ENCODE measurements at regions of chr3 and their contacts with region 1.

Region 1: GRCh38 chr3:129316131-129317013 is 37.7 kb downstream of the HMCES start:
- DNase-seq: peak; percentile 82 to 89 (median 85)
- H3K4me3 ChIP-seq: peak overlapping the region; percentile 81 to 86
- H3K4me3 Mint-ChIP-seq: peak overlapping the region; percentile 79 to 96 (median 89)
- H3K27ac ChIP-seq: peak overlapping the region; percentile 74
- H3K27ac Mint-ChIP-seq: peak overlapping the region; percentile 70 to 92 (median 87)
- H3K4me1 ChIP-seq: peaks cover 37% of the 10 kb centered on the region
- H3K4me1 Mint-ChIP-seq: peaks cover 13 to 30% (median 19%) of the 10 kb centered on the region in 4 donors
- H3K27me3 ChIP-seq: no peaks in the 10 kb centered on the region
- H3K27me3 Mint-ChIP-seq: no peaks in the 10 kb centered on the region

Region 2: DNA sequence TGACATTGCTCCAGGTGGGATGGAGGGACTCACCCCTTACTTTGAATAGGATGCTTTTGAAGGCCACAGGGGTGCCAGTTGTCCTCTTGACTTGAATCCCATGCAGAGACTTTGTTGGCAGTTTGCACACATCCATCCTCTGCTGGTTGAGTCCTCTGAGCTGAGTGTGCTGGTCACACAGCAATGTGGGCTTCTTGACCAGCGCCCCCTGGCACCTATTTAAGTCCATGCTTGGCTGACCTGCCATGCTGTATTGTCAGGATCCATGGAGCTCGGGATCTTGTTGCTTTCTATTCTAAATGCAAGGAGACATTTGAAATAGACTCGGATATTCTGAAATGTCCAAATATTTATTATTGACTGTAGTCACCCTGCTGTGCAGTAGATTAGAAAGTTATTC is 570.6 kb before region 1 on chr3:
- CTCF ChIA-PET with region 1: no interaction called
- POLR2A ChIA-PET with region 1: no interaction called
- intact Hi-C with region 1: no loop called
- DNase-seq: no peak
- H3K4me3 ChIP-seq: no peak overlapping the region
- H3K4me3 Mint-ChIP-seq: no peak overlapping the region
- H3K27ac ChIP-seq: no peak overlapping the region
- H3K27ac Mint-ChIP-seq: no peak overlapping the region
- H3K4me1 ChIP-seq: peaks cover 26% of the 10 kb centered on the region
- H3K4me1 Mint-ChIP-seq: peaks cover 29 to 55% (median 43%) of the 10 kb centered on the region in 4 donors
- H3K27me3 ChIP-seq: no peaks in the 10 kb centered on the region
- H3K27me3 Mint-ChIP-seq: no peaks in the 10 kb centered on the region

Region 3: GRCh38 chr3:129003578-129004160 is 312.7 kb before region 1 on chr3:
- CTCF ChIA-PET with region 1: interaction called, 4 read pairs
- POLR2A ChIA-PET with region 1: interaction called, 10 read pairs
- intact Hi-C with region 1: no loop called
- DNase-seq: peak; percentile 50 to 64 (median 57)
- H3K4me3 ChIP-seq: no peak overlapping the region
- H3K4me3 Mint-ChIP-seq: peak overlapping the region in 4 of 8 donors; percentile 59 to 73 (median 64)
- H3K27ac ChIP-seq: no peak overlapping the region
- H3K27ac Mint-ChIP-seq: peak overlapping the region in 1 of 7 donors; percentile 47
- H3K4me1 ChIP-seq: peaks cover 36% of the 10 kb centered on the region
- H3K4me1 Mint-ChIP-seq: peaks cover 20 to 47% (median 32%) of the 10 kb centered on the region in 4 donors
- H3K27me3 ChIP-seq: peaks cover 25% of the 10 kb centered on the region
- H3K27me3 Mint-ChIP-seq: peaks cover 22 to 27% of the 10 kb centered on the region in 2 donors

Region 4: DNA sequence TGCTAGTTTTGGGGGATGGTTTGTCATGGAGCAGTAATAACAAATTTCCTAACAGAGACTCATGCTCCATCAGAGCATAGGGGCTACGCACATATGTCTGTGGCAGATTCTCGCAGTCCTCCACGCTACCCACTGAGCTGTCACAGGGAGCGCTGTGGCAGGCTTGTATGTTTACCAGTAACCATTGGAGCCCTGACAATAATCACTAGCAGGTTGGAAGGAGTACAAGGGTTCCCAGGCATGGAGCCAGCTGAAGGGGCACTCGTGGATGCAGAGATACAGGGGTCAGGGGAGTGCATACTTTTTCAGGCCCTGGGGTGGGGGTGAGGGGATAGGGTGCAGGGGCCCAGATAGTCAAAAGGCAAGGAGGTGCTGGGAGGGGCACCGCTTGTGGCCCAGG is 263.7 kb before region 1 on chr3:
- CTCF ChIA-PET with region 1: interaction called, 14 read pairs
- POLR2A ChIA-PET with region 1: interaction called, 7 read pairs
- intact Hi-C with region 1: no loop called
- DNase-seq: no peak
- H3K4me3 ChIP-seq: no peak overlapping the region
- H3K4me3 Mint-ChIP-seq: no peak overlapping the region
- H3K27ac ChIP-seq: no peak overlapping the region
- H3K27ac Mint-ChIP-seq: peak overlapping the region in 3 of 7 donors; percentile 33 to 80 (median 52)
- H3K4me1 ChIP-seq: peaks cover 5% of the 10 kb centered on the region
- H3K4me1 Mint-ChIP-seq: peaks cover 6 to 8% (median 7%) of the 10 kb centered on the region in 4 donors
- H3K27me3 ChIP-seq: no peaks in the 10 kb centered on the region
- H3K27me3 Mint-ChIP-seq: no peaks in the 10 kb centered on the region

Region 5: DNA sequence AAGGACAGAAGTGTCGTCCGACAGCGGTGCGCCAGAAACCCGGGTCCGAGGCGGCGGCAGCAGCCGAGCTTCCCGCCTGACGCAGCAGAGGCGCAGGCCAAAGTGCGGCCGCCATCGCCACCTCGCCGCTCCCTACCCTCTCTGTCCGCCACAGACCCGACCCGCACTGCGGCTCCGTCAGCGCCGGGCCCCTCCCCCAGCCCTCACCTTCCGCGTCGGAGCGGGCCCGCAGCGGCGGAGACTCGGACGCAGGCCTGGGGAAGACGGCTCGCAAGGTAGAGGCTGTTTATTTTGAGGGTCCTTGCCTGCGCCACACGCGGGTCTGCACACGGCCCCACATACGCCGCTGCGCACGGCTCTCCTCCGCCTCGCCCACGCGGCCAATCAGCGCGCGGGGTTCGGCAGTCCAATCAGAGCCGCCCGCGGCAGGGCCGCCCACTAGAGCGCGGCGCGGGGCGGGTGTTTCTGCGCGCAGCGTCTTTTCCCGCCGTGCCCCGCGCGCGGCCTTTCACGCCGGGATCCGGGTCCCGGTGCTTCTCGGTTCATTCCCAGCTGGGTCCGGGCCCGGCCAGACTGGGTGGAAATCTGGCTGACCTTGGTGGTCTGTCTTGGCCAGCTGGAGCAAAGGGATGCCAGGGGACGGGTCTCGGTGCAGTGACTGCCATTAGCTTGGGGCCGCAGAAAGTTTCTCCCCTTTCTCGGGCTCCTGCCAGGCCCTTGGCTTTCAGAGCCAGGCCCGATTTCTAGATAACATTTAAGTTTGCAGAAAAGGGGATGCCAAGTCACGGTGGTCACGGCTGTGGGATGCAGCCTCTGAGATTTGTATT is 132.6 kb before region 1 on chr3 and contains the start of gene CNBP:
- CTCF ChIA-PET with region 1: no interaction called
- POLR2A ChIA-PET with region 1: interaction called, 27 read pairs
- intact Hi-C with region 1: loop called (anchors 5 kb)
- DNase-seq: peak; percentile 90 to 95 (median 93)
- H3K4me3 ChIP-seq: peak within 1 kb of the TSS; percentile 51 to 93
- H3K4me3 Mint-ChIP-seq: peak within 1 kb of the TSS; percentile 89 to 99 (median 97)
- H3K27ac ChIP-seq: peak within 1 kb of the TSS; percentile 99
- H3K27ac Mint-ChIP-seq: peak within 1 kb of the TSS; percentile 91 to 99 (median 98)
- H3K4me1 ChIP-seq: peaks cover 41% of the 10 kb centered on the region
- H3K4me1 Mint-ChIP-seq: peaks cover 20 to 55% (median 31%) of the 10 kb centered on the region in 4 donors
- H3K27me3 ChIP-seq: no peaks in the 10 kb centered on the region
- H3K27me3 Mint-ChIP-seq: no peaks in the 10 kb centered on the region
- total RNA-seq, gene CNBP: 369 to 400 TPM

Region 6: GRCh38 chr3:129211772-129212171 is 104.6 kb before region 1 on chr3:
- CTCF ChIA-PET with region 1: no interaction called
- POLR2A ChIA-PET with region 1: no interaction called
- intact Hi-C with region 1: no loop called
- DNase-seq: no peak
- H3K4me3 ChIP-seq: no peak overlapping the region
- H3K4me3 Mint-ChIP-seq: no peak overlapping the region
- H3K27ac ChIP-seq: no peak overlapping the region
- H3K27ac Mint-ChIP-seq: no peak overlapping the region
- H3K4me1 ChIP-seq: no peaks in the 10 kb centered on the region
- H3K4me1 Mint-ChIP-seq: no peaks in the 10 kb centered on the region
- H3K27me3 ChIP-seq: no peaks in the 10 kb centered on the region
- H3K27me3 Mint-ChIP-seq: peaks cover 0 to 5% of the 10 kb centered on the region in 2 donors

Region 7: DNA sequence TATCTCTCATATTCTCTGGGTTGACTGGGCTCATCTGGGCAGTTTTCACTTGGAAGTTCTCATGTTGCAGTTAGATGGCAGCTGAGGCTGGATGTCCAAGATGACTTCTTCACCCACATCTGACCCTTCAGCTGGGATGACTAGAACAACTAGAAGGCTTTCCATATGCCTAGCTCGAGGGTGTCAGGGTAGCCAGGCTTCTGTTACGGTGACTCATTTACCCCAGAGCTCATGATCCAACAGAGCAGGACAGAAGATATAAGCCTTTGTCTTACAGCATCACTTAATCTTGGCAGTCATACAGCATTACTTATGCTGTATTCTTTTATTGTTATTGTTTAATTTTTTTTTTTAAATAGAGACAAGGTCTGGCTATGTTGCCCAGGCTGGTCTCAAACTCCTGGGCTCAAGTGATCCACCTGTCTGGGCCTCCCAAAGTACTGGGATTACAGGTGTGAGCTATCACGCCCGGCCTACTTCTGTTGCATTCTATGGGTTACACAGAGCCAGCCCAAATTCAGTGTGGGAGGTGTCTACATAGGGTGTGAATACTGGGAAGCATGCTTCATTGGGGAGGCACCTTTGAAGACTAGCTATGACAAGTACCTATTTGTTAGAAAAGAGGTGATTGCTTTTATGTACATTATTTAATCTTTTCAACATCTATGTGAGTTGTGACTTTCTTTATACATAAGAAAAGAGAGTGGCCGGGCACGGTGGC is 27.0 kb before region 1 on chr3:
- CTCF ChIA-PET with region 1: interaction called, 6 read pairs
- POLR2A ChIA-PET with region 1: interaction called, 315 read pairs
- intact Hi-C with region 1: no loop called
- DNase-seq: no peak
- H3K4me3 ChIP-seq: no peak overlapping the region
- H3K4me3 Mint-ChIP-seq: no peak overlapping the region
- H3K27ac ChIP-seq: no peak overlapping the region
- H3K27ac Mint-ChIP-seq: peak overlapping the region in 2 of 7 donors; percentile 62 to 71
- H3K4me1 ChIP-seq: no peaks in the 10 kb centered on the region
- H3K4me1 Mint-ChIP-seq: peaks cover 9 to 13% (median 9%) of the 10 kb centered on the region in 4 donors
- H3K27me3 ChIP-seq: no peaks in the 10 kb centered on the region
- H3K27me3 Mint-ChIP-seq: no peaks in the 10 kb centered on the region

Region 8: GRCh38 chr3:129348734-129349133 is 32.4 kb after region 1 on chr3:
- CTCF ChIA-PET with region 1: no interaction called
- POLR2A ChIA-PET with region 1: no interaction called
- intact Hi-C with region 1: no loop called
- DNase-seq: no peak
- H3K4me3 ChIP-seq: no peak overlapping the region
- H3K4me3 Mint-ChIP-seq: no peak overlapping the region
- H3K27ac ChIP-seq: no peak overlapping the region
- H3K27ac Mint-ChIP-seq: no peak overlapping the region
- H3K4me1 ChIP-seq: peaks cover 6% of the 10 kb centered on the region
- H3K4me1 Mint-ChIP-seq: peaks cover 0 to 6% (median under 1%) of the 10 kb centered on the region in 4 donors
- H3K27me3 ChIP-seq: no peaks in the 10 kb centered on the region
- H3K27me3 Mint-ChIP-seq: peaks cover 4 to 5% of the 10 kb centered on the region in 2 donors

Region 9: GRCh38 chr3:129399145-129399894 is 82.9 kb after region 1 on chr3:
- CTCF ChIA-PET with region 1: interaction called, 5 read pairs
- POLR2A ChIA-PET with region 1: interaction called, 11 read pairs
- intact Hi-C with region 1: no loop called
- DNase-seq: peak; percentile 83 to 88 (median 84)
- H3K4me3 ChIP-seq: peak overlapping the region; percentile 83 to 95
- H3K4me3 Mint-ChIP-seq: peak overlapping the region; percentile 97 to 100 (median 98)
- H3K27ac ChIP-seq: peak overlapping the region; percentile 70
- H3K27ac Mint-ChIP-seq: peak overlapping the region; percentile 98 to 100 (median 99)
- H3K4me1 ChIP-seq: peaks cover 28% of the 10 kb centered on the region
- H3K4me1 Mint-ChIP-seq: peaks cover 21 to 55% (median 32%) of the 10 kb centered on the region in 4 donors
- H3K27me3 ChIP-seq: no peaks in the 10 kb centered on the region
- H3K27me3 Mint-ChIP-seq: no peaks in the 10 kb centered on the region

Region 10: GRCh38 chr3:129469026-129469425 is 152.7 kb after region 1 on chr3:
- CTCF ChIA-PET with region 1: no interaction called
- POLR2A ChIA-PET with region 1: no interaction called
- intact Hi-C with region 1: no loop called
- DNase-seq: peak in 3 of 5 donors; percentile 7 to 28 (median 23)
- H3K4me3 ChIP-seq: no peak overlapping the region
- H3K4me3 Mint-ChIP-seq: no peak overlapping the region
- H3K27ac ChIP-seq: no peak overlapping the region
- H3K27ac Mint-ChIP-seq: peak overlapping the region in 6 of 7 donors; percentile 18 to 77 (median 39)
- H3K4me1 ChIP-seq: peaks cover 13% of the 10 kb centered on the region
- H3K4me1 Mint-ChIP-seq: peaks cover 0 to 14% (median 8%) of the 10 kb centered on the region in 4 donors
- H3K27me3 ChIP-seq: no peaks in the 10 kb centered on the region
- H3K27me3 Mint-ChIP-seq: no peaks in the 10 kb centered on the region

Measured in CD4-positive, alpha-beta memory T cell (primary cell).